ENCODE measurements at regions of chr10 and their contacts with region 1.

Region 1: GRCh38 chr10:16828114-16828568 is 10.9 kb upstream of the RSU1 start:
- DNase-seq: peak; percentile 22 to 78 (median 69)
- ATAC-seq: peak; percentile 96
- H3K4me3 ChIP-seq: no peak overlapping the region
- H3K4me3 Mint-ChIP-seq: no peak overlapping the region
- H3K27ac ChIP-seq: no peak overlapping the region
- H3K27ac Mint-ChIP-seq: peak overlapping the region in 3 of 9 donors; percentile 63 to 84 (median 82)
- H3K4me1 ChIP-seq: no peaks in the 10 kb centered on the region
- H3K4me1 Mint-ChIP-seq: peaks cover 0 to 12% (median 8%) of the 10 kb centered on the region in 7 donors
- H3K27me3 ChIP-seq: no peaks in the 10 kb centered on the region
- H3K27me3 Mint-ChIP-seq: peaks cover 0 to 9% (median 0%) of the 10 kb centered on the region in 5 donors

Region 2: GRCh38 chr10:17249820-17250219 is 421.7 kb after region 1 on chr10:
- CTCF ChIA-PET with region 1: no interaction called
- POLR2A ChIA-PET with region 1: no interaction called
- intact Hi-C with region 1: loop called in 1 of 2 experiments (anchors 1 kb)
- DNase-seq: peak in 4 of 9 donors; percentile 26 to 39 (median 28)
- ATAC-seq: peak; percentile 47
- H3K4me3 ChIP-seq: no peak overlapping the region
- H3K4me3 Mint-ChIP-seq: no peak overlapping the region
- H3K27ac ChIP-seq: no peak overlapping the region
- H3K27ac Mint-ChIP-seq: no peak overlapping the region
- H3K4me1 ChIP-seq: no peaks in the 10 kb centered on the region
- H3K4me1 Mint-ChIP-seq: peaks cover 0 to 4% (median 0%) of the 10 kb centered on the region in 7 donors
- H3K27me3 ChIP-seq: no peaks in the 10 kb centered on the region
- H3K27me3 Mint-ChIP-seq: peaks cover 0 to 5% (median 0%) of the 10 kb centered on the region in 5 donors

Region 3: GRCh38 chr10:17454161-17455014 is 626.2 kb after region 1 on chr10 and contains the start of gene ST8SIA6:
- CTCF ChIA-PET with region 1: no interaction called
- POLR2A ChIA-PET with region 1: no interaction called
- intact Hi-C with region 1: loop called in 1 of 2 experiments (anchors 5 kb)
- DNase-seq: peak; percentile 26 to 64 (median 52)
- ATAC-seq: peak; percentile 80
- H3K4me3 ChIP-seq: peak within 1 kb of the TSS; percentile 64
- H3K4me3 Mint-ChIP-seq: peak within 1 kb of the TSS; percentile 82 to 92 (median 89)
- H3K27ac ChIP-seq: peak within 1 kb of the TSS; percentile 29
- H3K27ac Mint-ChIP-seq: peak within 1 kb of the TSS in 5 of 9 donors; percentile 18 to 87 (median 74)
- H3K4me1 ChIP-seq: peaks cover 4 to 10% of the 10 kb centered on the region in 2 donors
- H3K4me1 Mint-ChIP-seq: peaks cover 5 to 23% (median 20%) of the 10 kb centered on the region in 7 donors
- H3K27me3 ChIP-seq: no peaks in the 10 kb centered on the region
- H3K27me3 Mint-ChIP-seq: peaks cover 0 to 66% (median 5%) of the 10 kb centered on the region in 5 donors
- total RNA-seq, gene ST8SIA6: 0.43 to 2.5 (median 0.60) TPM

Region 4: GRCh38 chr10:17742918-17743317 is 914.8 kb after region 1 on chr10:
- CTCF ChIA-PET with region 1: no interaction called
- POLR2A ChIA-PET with region 1: no interaction called
- intact Hi-C with region 1: loop called (anchors 5 kb)
- DNase-seq: peak; percentile 19 to 66 (median 56)
- ATAC-seq: peak; percentile 75
- H3K4me3 ChIP-seq: no peak overlapping the region
- H3K4me3 Mint-ChIP-seq: no peak overlapping the region
- H3K27ac ChIP-seq: no peak overlapping the region
- H3K27ac Mint-ChIP-seq: no peak overlapping the region
- H3K4me1 ChIP-seq: no peaks in the 10 kb centered on the region
- H3K4me1 Mint-ChIP-seq: peaks cover 3 to 15% (median 5%) of the 10 kb centered on the region in 7 donors
- H3K27me3 ChIP-seq: no peaks in the 10 kb centered on the region
- H3K27me3 Mint-ChIP-seq: no peaks in the 10 kb centered on the region